ENCODE measurements at regions of chr11 and their contacts with region 1.

Region 1: DNA sequence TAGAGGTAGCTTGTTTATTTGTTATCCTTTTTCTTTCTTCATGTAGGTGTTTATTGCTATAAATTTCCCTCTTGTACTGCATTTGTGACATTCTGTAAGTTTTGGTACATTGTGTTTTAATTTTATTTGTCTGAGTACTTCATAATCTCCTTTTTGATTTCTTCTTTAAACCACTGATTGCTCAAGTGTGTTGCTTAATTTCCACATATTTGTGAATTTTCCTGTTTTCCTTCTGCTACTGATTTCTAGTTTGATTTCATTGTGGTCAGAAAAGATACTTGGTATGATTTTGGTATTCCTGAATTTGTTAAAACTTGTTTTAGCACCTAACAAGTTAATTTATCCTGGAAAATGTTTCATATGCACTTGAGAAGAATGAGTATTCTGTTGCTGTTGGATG is 15.1 kb downstream of the OR10V1 start:
- DNase-seq: no peak
- H3K4me3 ChIP-seq: no peak overlapping the region
- H3K27ac ChIP-seq: no peak overlapping the region
- H3K4me1 ChIP-seq: no peaks in the 10 kb centered on the region
- H3K27me3 ChIP-seq: no peaks in the 10 kb centered on the region
- CTCF ChIP-seq: no peak
- EP300 ChIP-seq: no peak
- POLR2A ChIP-seq: no peak

Region 2: DNA sequence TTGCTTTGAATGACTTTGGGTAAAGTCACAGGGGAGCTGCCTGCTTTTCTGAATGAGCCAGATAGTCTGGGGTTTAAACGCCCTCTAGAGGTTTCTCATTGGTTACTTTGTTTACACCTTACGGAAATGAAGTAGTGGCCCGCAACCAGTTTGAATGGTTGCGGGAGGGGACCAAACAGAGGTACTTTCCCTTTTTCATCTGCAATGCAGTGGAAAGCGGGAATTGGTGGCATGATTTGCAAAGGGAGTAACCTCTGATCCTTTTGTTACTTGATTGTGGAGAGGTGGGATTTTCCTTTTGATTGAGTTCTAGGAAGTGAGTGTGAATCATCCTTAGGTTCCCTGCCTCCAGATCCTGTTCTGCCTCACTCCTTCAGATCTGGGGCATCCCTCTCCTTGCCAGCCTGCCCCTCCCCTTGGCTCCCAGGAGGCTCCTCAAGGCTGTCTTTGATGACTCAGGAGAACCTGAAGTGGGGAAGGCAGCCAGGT is 775.2 kb before region 1 on chr11:
- intact Hi-C with region 1: loop called in 1 of 4 experiments (anchors 10 kb)
- DNase-seq: no peak
- H3K4me3 ChIP-seq: no peak overlapping the region
- H3K27ac ChIP-seq: no peak overlapping the region
- H3K4me1 ChIP-seq: peaks cover 2% of the 10 kb centered on the region
- H3K27me3 ChIP-seq: no peaks in the 10 kb centered on the region
- CTCF ChIP-seq: no peak
- EP300 ChIP-seq: no peak
- POLR2A ChIP-seq: no peak

Region 3: DNA sequence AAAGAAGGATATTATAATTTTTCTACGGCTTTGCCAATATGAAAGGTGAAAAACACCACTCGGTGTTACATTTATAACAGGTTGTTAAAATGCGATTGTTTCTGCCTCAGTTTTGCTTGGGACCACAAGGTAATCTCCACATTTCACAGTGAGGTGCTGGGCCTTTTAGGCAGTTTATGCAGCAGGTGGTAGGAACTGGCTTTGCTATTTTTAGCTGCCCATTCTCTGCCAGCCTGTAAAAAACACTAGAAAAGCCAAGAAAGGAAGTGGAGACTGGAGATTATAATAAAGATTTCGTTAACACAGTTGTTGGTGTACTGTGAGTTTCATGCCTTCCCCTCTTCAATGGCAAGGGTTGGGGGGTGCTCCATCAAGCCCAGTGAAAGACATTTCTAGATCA is 120.1 kb after region 1 on chr11:
- intact Hi-C with region 1: no loop called
- DNase-seq: no peak
- H3K4me3 ChIP-seq: no peak overlapping the region
- H3K27ac ChIP-seq: no peak overlapping the region
- H3K4me1 ChIP-seq: peaks cover 6% of the 10 kb centered on the region
- H3K27me3 ChIP-seq: no peaks in the 10 kb centered on the region
- CTCF ChIP-seq: no peak
- EP300 ChIP-seq: no peak
- POLR2A ChIP-seq: no peak